ENCODE measurements at regions of chrX and their contacts with region 1.

Region 1: DNA sequence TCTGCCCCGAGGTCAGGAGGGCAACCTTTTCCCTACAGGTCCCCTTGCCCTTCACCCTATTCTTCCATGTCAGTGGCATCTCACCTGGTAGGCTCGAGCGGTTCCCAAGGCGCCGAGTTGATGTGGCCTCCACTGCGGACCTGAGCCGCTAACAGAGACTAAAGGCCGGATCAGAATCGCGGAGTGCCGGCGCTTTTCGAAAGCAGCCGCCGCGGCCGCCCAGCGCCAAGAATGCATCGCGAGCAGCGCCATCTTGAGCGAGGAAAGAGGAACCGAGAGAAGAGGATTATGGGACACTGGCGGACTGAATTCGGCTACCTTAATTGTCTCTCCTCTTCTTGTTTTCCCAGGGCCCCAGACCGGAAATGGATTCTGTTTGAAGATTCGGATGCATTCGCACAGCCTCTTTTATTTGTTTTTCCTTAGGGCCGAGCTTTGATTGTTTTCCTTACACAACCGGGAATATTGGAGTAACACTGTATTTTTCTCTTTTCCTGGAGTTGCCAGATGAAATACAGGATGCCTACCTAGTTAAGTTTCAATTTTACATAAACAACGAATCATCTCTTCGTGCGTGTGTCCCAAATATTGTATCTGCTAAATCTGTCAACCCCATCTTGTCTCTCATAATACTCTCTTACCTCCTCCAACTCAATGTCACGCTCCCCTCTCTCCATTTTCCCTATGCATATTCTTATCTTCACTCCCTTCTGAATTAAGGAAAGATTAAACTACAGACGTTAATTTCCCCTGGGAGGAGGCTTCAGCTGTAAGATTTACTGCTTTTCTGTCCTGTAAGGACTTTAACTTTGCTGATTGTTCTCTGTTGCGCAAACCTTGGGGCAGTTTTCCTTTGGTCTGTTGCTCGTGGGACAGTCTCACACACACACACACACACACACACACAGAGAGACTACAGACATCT is at the start of gene ABCB7:
- DNase-seq: peak; percentile 24 to 68 (median 59)
- ATAC-seq: peak; percentile 95
- H3K4me3 ChIP-seq: peak within 1 kb of the TSS; percentile 86
- H3K4me3 Mint-ChIP-seq: peak within 1 kb of the TSS; percentile 87 to 100 (median 95)
- H3K27ac ChIP-seq: peak within 1 kb of the TSS; percentile 75
- H3K27ac Mint-ChIP-seq: peak within 1 kb of the TSS; percentile 92 to 100 (median 96)
- H3K4me1 ChIP-seq: no peaks in the 10 kb centered on the region
- H3K4me1 Mint-ChIP-seq: peaks cover 10 to 63% (median 41%) of the 10 kb centered on the region in 7 donors
- H3K27me3 ChIP-seq: no peaks in the 10 kb centered on the region
- H3K27me3 Mint-ChIP-seq: no peaks in the 10 kb centered on the region
- total RNA-seq, gene ABCB7: 19.4 to 33.0 (median 26.3) TPM

Region 2: GRCh38 chrX:73206366-73206765 is 1949.9 kb before region 1 on chrX:
- CTCF ChIA-PET with region 1: no interaction called
- POLR2A ChIA-PET with region 1: no interaction called
- intact Hi-C with region 1: no loop called
- DNase-seq: no peak
- ATAC-seq: no peak
- H3K4me3 ChIP-seq: no peak overlapping the region
- H3K4me3 Mint-ChIP-seq: no peak overlapping the region
- H3K27ac ChIP-seq: no peak overlapping the region
- H3K27ac Mint-ChIP-seq: no peak overlapping the region
- H3K4me1 ChIP-seq: no peaks in the 10 kb centered on the region
- H3K4me1 Mint-ChIP-seq: no peaks in the 10 kb centered on the region
- H3K27me3 ChIP-seq: no peaks in the 10 kb centered on the region
- H3K27me3 Mint-ChIP-seq: no peaks in the 10 kb centered on the region

Region 3: GRCh38 chrX:74049141-74049540 is 1107.1 kb before region 1 on chrX:
- CTCF ChIA-PET with region 1: no interaction called
- POLR2A ChIA-PET with region 1: no interaction called
- intact Hi-C with region 1: no loop called
- DNase-seq: no peak
- ATAC-seq: no peak
- H3K4me3 ChIP-seq: no peak overlapping the region
- H3K4me3 Mint-ChIP-seq: no peak overlapping the region
- H3K27ac ChIP-seq: no peak overlapping the region
- H3K27ac Mint-ChIP-seq: no peak overlapping the region
- H3K4me1 ChIP-seq: no peaks in the 10 kb centered on the region
- H3K4me1 Mint-ChIP-seq: no peaks in the 10 kb centered on the region
- H3K27me3 ChIP-seq: no peaks in the 10 kb centered on the region
- H3K27me3 Mint-ChIP-seq: no peaks in the 10 kb centered on the region

Region 4: GRCh38 chrX:74940414-74940813 is 215.9 kb before region 1 on chrX:
- CTCF ChIA-PET with region 1: no interaction called
- POLR2A ChIA-PET with region 1: no interaction called
- intact Hi-C with region 1: loop called in 1 of 2 experiments (anchors 5 kb)
- DNase-seq: peak in 5 of 9 donors; percentile 5 to 54 (median 30)
- ATAC-seq: no peak
- H3K4me3 ChIP-seq: no peak overlapping the region
- H3K4me3 Mint-ChIP-seq: peak overlapping the region in 7 of 10 donors; percentile 24 to 60 (median 42)
- H3K27ac ChIP-seq: no peak overlapping the region
- H3K27ac Mint-ChIP-seq: peak overlapping the region in 7 of 9 donors; percentile 4 to 85 (median 50)
- H3K4me1 ChIP-seq: no peaks in the 10 kb centered on the region
- H3K4me1 Mint-ChIP-seq: peaks cover 0 to 38% (median 22%) of the 10 kb centered on the region in 7 donors
- H3K27me3 ChIP-seq: no peaks in the 10 kb centered on the region
- H3K27me3 Mint-ChIP-seq: no peaks in the 10 kb centered on the region

Region 5: DNA sequence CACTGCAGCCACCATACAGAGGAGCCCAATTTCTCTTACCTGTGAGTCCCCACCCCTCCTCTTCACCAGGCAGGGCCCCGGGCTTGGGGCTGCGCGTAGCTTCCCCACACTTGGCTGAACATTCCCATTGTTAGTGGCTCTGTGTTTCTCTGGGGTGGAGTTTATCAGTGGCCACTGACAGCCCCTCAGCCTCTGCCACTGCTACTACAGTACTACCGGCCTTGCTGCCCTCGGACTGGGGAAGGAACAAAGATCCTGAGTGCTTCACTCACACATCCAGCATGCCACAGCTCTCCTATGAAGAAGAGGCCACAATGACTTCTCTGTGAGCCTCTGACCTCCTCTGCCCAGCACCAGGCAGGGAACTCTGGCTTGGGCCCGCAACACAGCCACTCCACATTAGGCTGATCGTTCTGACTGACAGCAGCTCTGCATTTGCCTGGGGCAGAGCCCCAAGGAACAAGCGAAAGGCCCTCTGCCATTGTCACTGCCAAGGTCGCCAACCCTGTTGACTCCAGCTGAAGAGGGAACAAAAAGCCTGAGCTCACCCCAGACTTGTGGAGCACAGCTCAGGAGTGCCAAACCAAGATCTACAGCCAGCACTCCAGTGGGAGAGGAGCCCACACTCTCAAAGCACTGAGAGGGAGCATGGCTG is 24.2 kb before region 1 on chrX:
- CTCF ChIA-PET with region 1: no interaction called
- POLR2A ChIA-PET with region 1: no interaction called
- intact Hi-C with region 1: no loop called
- DNase-seq: no peak
- ATAC-seq: no peak
- H3K4me3 ChIP-seq: no peak overlapping the region
- H3K4me3 Mint-ChIP-seq: no peak overlapping the region
- H3K27ac ChIP-seq: no peak overlapping the region
- H3K27ac Mint-ChIP-seq: peak overlapping the region in 1 of 9 donors; percentile 17
- H3K4me1 ChIP-seq: no peaks in the 10 kb centered on the region
- H3K4me1 Mint-ChIP-seq: peaks cover 5 to 63% (median 47%) of the 10 kb centered on the region in 7 donors
- H3K27me3 ChIP-seq: no peaks in the 10 kb centered on the region
- H3K27me3 Mint-ChIP-seq: no peaks in the 10 kb centered on the region